ENCODE measurements at regions of chr7 and their contacts with region 1.

Region 1: GRCh38 chr7:36315309-36316133 is 74.1 kb upstream of the ANLN start:
- DNase-seq: no peak
- CTCF ChIP-seq: no peak

Region 2: GRCh38 chr7:35617041-35617440 is 698.5 kb before region 1 on chr7:
- CTCF ChIA-PET with region 1: no interaction called
- POLR2A ChIA-PET with region 1: no interaction called
- DNase-seq: no peak
- CTCF ChIP-seq: no peak

Region 3: GRCh38 chr7:35985126-35985754 is 330.3 kb before region 1 on chr7:
- CTCF ChIA-PET with region 1: interaction called, 44 read pairs
- POLR2A ChIA-PET with region 1: no interaction called
- DNase-seq: peak; percentile 83
- CTCF ChIP-seq: peak; percentile 89

Region 4: DNA sequence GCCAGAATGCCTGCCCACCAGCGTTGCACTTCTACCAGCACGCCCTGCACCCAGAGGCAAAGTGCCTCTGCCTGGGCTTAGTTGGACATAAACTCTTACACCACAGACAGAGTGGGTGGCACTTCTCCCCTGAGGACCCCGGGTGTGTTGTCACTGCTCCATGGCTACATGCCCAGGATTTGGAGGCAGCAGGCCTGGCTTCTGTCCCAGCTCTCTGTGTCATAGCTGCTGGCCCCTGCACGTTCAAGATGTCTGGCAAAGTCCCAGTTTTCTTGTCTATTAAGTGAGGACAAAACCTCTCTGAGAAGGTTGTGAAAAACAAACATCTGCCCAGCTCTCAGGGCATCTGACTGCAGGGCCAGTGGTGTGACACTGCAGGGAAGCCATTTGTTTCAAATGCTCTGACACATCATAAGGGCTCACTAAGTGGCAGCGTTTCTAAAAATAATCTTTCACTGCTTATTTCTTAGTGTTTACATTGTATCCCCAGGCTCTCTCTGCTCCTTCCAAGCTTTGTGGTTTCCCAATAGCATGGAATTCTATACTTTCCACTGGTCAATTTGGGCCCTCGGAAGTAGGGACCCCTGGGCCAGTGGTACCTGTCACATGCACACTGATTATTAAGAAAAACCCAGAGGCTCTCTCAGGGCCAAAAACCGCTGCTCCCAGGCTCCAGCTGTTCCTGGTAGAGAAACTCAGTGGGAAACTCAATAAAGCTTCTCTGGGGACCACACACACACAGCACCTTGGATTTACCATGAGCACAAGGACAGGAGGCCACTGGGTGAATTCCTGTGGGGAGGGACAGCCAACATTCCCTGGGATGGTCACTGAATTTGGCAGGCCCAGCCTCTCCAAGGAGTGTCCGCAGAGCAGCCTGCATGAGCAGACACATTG is 12.1 kb before region 1 on chr7:
- CTCF ChIA-PET with region 1: interaction called, 35 read pairs
- POLR2A ChIA-PET with region 1: no interaction called
- DNase-seq: no peak
- CTCF ChIP-seq: no peak

Region 5: GRCh38 chr7:36336390-36336789 is 20.9 kb after region 1 on chr7:
- CTCF ChIA-PET with region 1: interaction called, 13 read pairs
- POLR2A ChIA-PET with region 1: no interaction called
- DNase-seq: no peak
- CTCF ChIP-seq: no peak

Measured in GM10248 (cell line).